WTC11 (cell line): ENCODE measurements at regions of chr2 and their contacts with region 1.

Region 1: GRCh38 chr2:101026253-101026701 is 24.2 kb downstream of the RPL31 start:
- DNase-seq: no peak
- ATAC-seq: peak; percentile 68
- H3K4me3 Mint-ChIP-seq: no peak overlapping the region
- H3K27ac Mint-ChIP-seq: peak overlapping the region; percentile 73
- H3K4me1 Mint-ChIP-seq: peaks cover 15% of the 10 kb centered on the region
- H3K27me3 Mint-ChIP-seq: no peaks in the 10 kb centered on the region
- CTCF ChIP-seq: no peak

Region 2: DNA sequence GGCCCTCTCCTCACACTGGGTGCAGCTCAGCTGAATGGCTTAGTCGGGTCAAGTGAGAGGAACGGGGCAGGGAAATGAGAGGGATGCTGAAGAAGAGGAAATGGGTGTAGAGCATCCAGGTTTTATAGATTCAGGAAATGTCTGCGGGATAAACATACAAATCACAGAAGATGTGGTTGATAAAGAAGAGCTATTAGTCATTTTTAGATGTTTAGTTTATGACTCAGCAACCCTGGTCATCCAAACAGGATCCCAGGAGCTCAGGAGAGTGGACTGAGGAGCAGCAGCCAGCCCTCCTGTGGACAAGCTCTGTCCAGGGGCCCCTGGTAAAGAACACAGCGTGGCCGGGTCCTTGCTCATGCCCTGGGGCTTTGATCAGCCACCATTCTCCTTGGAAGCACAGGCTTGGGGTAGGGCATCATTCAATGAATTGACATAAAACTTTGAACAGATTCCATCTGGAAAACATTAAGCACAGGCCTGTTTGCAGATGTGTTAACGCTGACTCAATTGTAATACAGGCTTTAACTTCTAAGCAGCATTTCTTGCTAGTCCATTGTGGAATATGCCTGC is 123.4 kb before region 1 on chr2:
- CTCF ChIA-PET with region 1: no interaction called
- POLR2A ChIA-PET with region 1: no interaction called
- DNase-seq: no peak
- ATAC-seq: no peak
- H3K4me3 Mint-ChIP-seq: no peak overlapping the region
- H3K27ac Mint-ChIP-seq: no peak overlapping the region
- H3K4me1 Mint-ChIP-seq: no peaks in the 10 kb centered on the region
- H3K27me3 Mint-ChIP-seq: no peaks in the 10 kb centered on the region
- CTCF ChIP-seq: no peak

Region 3: GRCh38 chr2:101205521-101205998 is 179.3 kb after region 1 on chr2:
- CTCF ChIA-PET with region 1: interaction called, 12 read pairs
- POLR2A ChIA-PET with region 1: no interaction called
- DNase-seq: peak; percentile 41
- ATAC-seq: peak; percentile 99
- H3K4me3 Mint-ChIP-seq: no peak overlapping the region
- H3K27ac Mint-ChIP-seq: no peak overlapping the region
- H3K4me1 Mint-ChIP-seq: peaks cover 10% of the 10 kb centered on the region
- H3K27me3 Mint-ChIP-seq: 0 out of 2 replicates have a peak, but pooled peaks cover under 1% of the 10 kb centered on the region
- CTCF ChIP-seq: no peak